ENCODE measurements at regions of chr1 and their contacts with region 1.

Region 1: DNA sequence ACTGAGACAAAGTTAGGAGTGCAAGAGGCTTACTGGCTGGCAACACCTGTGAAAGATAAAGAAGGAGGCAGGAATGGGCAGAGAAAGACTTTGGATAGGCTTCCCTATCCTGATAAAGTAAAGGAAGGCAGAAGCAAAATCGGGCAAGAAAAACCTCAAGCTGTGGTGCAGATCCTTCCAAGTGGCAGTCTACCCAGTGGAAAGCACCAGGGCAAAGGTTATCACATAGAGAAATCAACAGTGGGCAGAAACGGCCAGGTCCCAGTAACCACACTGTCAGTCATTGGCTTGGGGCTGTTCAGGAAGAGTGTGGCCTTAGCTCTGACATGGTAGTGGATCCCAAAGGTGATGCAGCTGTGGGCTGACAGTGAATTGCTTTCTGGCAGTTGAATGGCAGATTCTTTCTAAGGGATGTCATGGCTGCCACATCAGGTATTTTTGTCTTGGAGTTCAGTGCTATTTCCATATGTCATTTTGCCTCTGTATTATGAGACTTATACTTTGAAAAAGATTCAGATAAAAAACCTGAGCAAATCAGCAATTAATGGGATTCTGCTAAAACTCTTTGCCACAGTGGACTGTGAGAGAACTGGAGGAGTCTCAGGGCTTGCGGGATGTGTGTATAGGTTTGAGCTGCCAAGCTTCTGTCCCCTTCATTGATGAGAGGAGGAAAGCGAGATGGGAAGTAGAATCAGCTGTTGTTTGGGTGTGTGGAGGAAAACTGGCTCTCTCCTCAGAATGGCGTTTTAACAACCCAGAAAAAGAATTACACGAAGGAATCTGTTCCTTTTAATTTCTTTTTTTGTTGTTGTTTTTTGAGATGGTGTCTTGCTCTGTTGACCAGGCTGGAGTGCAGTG is 8.0 kb upstream of the CGN start:
- DNase-seq: no peak
- H3K4me3 ChIP-seq: no peak overlapping the region
- H3K27ac ChIP-seq: no peak overlapping the region
- H3K4me1 ChIP-seq: no peaks in the 10 kb centered on the region
- H3K27me3 ChIP-seq: no peaks in the 10 kb centered on the region
- CTCF ChIP-seq: no peak
- EP300 ChIP-seq: no peak
- POLR2A ChIP-seq: no peak

Region 2: GRCh38 chr1:151243683-151244216 is 259.4 kb before region 1 on chr1:
- intact Hi-C with region 1: no loop called
- DNase-seq: no peak
- H3K4me3 ChIP-seq: no peak overlapping the region
- H3K27ac ChIP-seq: no peak overlapping the region
- H3K4me1 ChIP-seq: no peaks in the 10 kb centered on the region
- H3K27me3 ChIP-seq: no peaks in the 10 kb centered on the region
- CTCF ChIP-seq: no peak
- EP300 ChIP-seq: no peak
- POLR2A ChIP-seq: no peak

Region 3: DNA sequence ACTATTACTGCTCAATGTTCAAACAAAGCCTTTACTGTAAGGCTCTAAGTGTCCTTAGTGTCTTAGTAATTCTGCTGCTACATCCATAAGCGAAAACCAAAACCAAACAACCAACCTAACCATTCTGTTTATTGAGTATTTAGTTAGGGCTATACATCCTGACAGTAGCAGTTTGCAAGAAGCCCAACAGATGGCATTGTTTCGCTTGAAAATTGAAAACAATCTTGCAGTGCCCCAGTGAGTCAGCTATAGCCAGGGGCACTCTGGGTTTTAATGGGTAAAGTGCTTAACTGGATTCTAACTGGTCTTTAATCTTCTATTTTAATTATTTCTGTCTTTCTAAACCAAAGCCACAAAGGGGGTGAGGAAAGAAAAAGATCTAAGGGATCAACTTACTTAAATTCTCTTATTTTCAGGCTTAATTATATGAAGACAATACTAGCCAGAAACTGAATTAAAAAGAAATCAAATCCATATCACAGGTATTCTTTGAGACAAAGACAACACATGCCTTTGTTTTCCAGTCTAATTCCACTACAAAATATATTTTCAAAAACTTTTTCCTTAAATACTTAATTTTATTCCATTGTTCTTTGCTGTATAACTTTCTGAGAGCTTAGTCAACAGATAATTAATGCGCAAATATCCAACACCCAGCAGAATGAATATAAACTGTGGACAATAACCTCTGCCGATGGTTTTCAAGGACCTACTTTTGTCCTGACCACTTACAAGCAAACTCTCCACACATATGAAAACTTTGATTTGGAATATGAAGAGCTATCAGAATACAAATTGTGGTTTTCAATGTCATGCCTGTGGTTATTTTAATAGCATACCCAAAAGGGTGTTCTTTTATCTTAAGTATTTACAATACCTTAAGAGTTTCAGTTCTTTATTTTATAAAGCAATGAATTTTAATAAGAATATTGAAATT is 59.0 kb before region 1 on chr1:
- intact Hi-C with region 1: loop called in 1 of 4 experiments (anchors 2 kb)
- DNase-seq: peak in 2 of 5 donors; percentile 41 to 63
- H3K4me3 ChIP-seq: no peak overlapping the region
- H3K27ac ChIP-seq: no peak overlapping the region
- H3K4me1 ChIP-seq: peaks cover 6% of the 10 kb centered on the region
- H3K27me3 ChIP-seq: no peaks in the 10 kb centered on the region
- CTCF ChIP-seq: peak; percentile 8 to 62 (median 43)
- EP300 ChIP-seq: no peak
- POLR2A ChIP-seq: no peak

Measured in ovary (tissue), 10 donors.